HepG2 (cell line): ENCODE measurements at regions of chr4 and their contacts with region 1.

Region 1: GRCh38 chr4:89024051-89024675 is 32.8 kb downstream of the FAM13A start:
- DNase-seq: peak; percentile 77
- ATAC-seq: peak; percentile 98
- H3K4me3 ChIP-seq: no peak overlapping the region
- H3K27ac ChIP-seq: no peak overlapping the region
- H3K4me1 ChIP-seq: peaks cover 35% of the 10 kb centered on the region
- H3K27me3 ChIP-seq: no peaks in the 10 kb centered on the region
- CTCF ChIP-seq: peak; percentile 87
- EP300 ChIP-seq: no peak
- POLR2A ChIP-seq: no peak
- RAD21 ChIP-seq: peak; percentile 82

Region 2: GRCh38 chr4:88533937-88534750 is 490.0 kb before region 1 on chr4:
- CTCF ChIA-PET with region 1: no interaction called
- POLR2A ChIA-PET with region 1: no interaction called
- in situ Hi-C with region 1: loop called (anchors 10 kb)
- intact Hi-C with region 1: loop called (anchors 1 kb)
- DNase-seq: no peak
- ATAC-seq: no peak
- H3K4me3 ChIP-seq: no peak overlapping the region
- H3K27ac ChIP-seq: no peak overlapping the region
- H3K4me1 ChIP-seq: peaks cover 4% of the 10 kb centered on the region; the same call in 1 of the 2 replicates
- H3K27me3 ChIP-seq: no peaks in the 10 kb centered on the region
- CTCF ChIP-seq: no peak
- EP300 ChIP-seq: no peak
- POLR2A ChIP-seq: no peak
- RAD21 ChIP-seq: no peak

Region 3: DNA sequence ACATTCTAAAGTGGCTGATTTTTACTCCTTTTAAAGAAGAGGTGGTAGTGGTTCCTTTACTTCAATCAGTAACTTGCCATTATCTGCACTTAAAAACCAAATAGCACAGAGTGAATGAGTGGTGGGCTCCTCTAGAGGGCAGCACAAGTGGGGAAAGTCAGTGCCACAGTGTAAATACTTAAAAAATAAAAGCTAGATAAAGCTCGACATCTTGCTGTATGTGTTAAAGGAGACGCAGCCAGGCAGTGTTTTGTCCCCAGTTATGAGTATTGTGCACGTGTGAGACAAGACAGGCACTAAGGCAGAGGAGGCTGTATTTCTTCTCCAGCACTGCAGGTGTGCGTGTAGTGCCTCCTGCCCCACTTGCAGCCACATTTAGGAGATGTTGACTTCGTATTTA is 351.2 kb before region 1 on chr4:
- CTCF ChIA-PET with region 1: interaction called, 11 read pairs
- POLR2A ChIA-PET with region 1: no interaction called
- in situ Hi-C with region 1: no loop called
- intact Hi-C with region 1: loop called (anchors 10 kb)
- DNase-seq: peak; percentile 28
- ATAC-seq: peak; percentile 93
- H3K4me3 ChIP-seq: no peak overlapping the region
- H3K27ac ChIP-seq: no peak overlapping the region
- H3K4me1 ChIP-seq: no peaks in the 10 kb centered on the region
- H3K27me3 ChIP-seq: no peaks in the 10 kb centered on the region
- CTCF ChIP-seq: peak; percentile 73
- EP300 ChIP-seq: no peak
- POLR2A ChIP-seq: no peak
- RAD21 ChIP-seq: no peak

Region 4: GRCh38 chr4:88706574-88706973 is 317.6 kb before region 1 on chr4:
- CTCF ChIA-PET with region 1: interaction called, 13 read pairs
- POLR2A ChIA-PET with region 1: no interaction called
- in situ Hi-C with region 1: loop called (anchors 10 kb)
- intact Hi-C with region 1: loop called (anchors 1 kb)
- DNase-seq: peak; percentile 53
- ATAC-seq: peak; percentile 92
- H3K4me3 ChIP-seq: no peak overlapping the region
- H3K27ac ChIP-seq: no peak overlapping the region
- H3K4me1 ChIP-seq: no peaks in the 10 kb centered on the region
- H3K27me3 ChIP-seq: no peaks in the 10 kb centered on the region
- CTCF ChIP-seq: peak; percentile 72
- EP300 ChIP-seq: no peak
- POLR2A ChIP-seq: no peak
- RAD21 ChIP-seq: peak; percentile 65; the same call in 1 of the 2 replicates

Region 5: DNA sequence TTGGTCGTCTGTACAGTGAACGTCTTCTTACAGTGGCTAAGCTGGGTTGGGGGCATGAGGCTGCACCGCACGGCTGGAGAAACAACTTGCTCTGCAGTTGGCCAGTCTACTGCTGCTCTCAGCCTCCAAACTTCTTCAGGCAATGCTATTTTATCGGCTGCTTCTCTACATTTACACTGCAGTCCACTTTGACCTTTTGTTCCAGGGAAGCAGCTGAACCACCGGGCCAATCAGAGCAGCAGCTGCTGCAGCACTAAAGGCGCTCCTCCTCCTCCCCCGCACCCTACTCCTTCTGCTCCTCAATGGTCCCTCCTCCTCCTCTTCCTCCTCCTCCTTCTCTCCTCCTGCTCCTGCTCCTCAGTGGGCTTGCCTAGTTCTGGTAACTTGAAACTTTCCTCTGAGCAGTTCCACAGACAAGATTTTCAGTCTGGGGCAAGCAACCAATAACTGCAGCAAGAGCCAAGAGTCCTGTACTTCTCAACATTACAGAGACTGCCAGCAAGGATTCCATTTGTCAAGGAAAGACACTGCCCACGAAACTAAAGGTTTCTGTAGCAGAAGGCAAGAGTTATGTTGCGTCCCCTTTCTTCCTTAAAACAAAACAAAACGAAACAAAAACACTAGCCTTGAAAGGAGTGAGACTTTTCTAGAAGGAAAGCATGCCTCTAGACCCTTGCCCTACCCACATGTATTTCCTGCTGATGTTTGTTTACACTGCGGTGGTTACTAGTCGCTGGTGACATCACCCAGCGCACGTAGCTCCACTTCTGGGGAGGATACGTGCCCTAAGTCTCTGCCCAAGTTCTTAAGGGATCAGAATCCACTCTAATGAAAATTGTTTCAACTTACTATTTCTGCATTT is 200.9 kb before region 1 on chr4:
- CTCF ChIA-PET with region 1: interaction called, 78 read pairs
- POLR2A ChIA-PET with region 1: no interaction called
- in situ Hi-C with region 1: loop called (anchors 5 kb)
- intact Hi-C with region 1: loop called (anchors 1 kb)
- DNase-seq: peak; percentile 61
- ATAC-seq: peak; percentile 97
- H3K4me3 ChIP-seq: peak overlapping the region; percentile 60 to 78 (median 76)
- H3K27ac ChIP-seq: peak overlapping the region; percentile 64
- H3K4me1 ChIP-seq: peaks cover 57% of the 10 kb centered on the region
- H3K27me3 ChIP-seq: no peaks in the 10 kb centered on the region; a peak in 1 of 5 replicates
- CTCF ChIP-seq: no peak
- EP300 ChIP-seq: peak in 1 of 2 experiments; percentile 64; a peak in 1 of 4 replicates
- POLR2A ChIP-seq: peak; percentile 34 to 95; a peak in 3 of 4 replicates
- RAD21 ChIP-seq: no peak

Region 6: GRCh38 chr4:88991761-88992160 is 32.4 kb before region 1 on chr4:
- CTCF ChIA-PET with region 1: no interaction called
- POLR2A ChIA-PET with region 1: no interaction called
- in situ Hi-C with region 1: no loop called
- intact Hi-C with region 1: no loop called
- DNase-seq: no peak
- ATAC-seq: no peak
- H3K4me3 ChIP-seq: no peak overlapping the region
- H3K27ac ChIP-seq: no peak overlapping the region
- H3K4me1 ChIP-seq: 0 out of 2 replicates have a peak, but pooled peaks cover 8% of the 10 kb centered on the region
- H3K27me3 ChIP-seq: no peaks in the 10 kb centered on the region
- CTCF ChIP-seq: no peak
- EP300 ChIP-seq: no peak
- POLR2A ChIP-seq: no peak
- RAD21 ChIP-seq: no peak

Region 7: DNA sequence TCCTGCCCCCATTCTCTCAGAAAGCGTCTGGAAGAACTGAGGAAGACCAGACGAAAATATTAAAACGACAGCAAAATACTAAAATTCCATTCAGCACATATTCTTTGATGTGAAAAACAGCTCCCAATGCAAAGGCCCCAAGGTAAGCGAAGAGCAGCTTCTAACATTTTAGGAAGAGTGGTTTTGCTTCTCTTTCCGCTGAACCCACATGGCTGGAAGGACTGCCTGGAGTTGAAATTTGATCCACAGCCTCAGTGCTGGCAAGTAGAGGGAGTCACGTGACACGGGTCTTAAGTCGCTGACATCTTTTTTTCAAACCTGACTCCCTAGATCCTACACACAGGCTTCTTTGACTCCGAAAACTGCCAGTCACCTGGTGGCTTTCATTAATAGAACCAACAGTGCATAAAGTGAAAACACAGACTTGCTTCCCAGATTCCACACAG is 32.8 kb after region 1 on chr4 and contains the start of gene FAM13A:
- CTCF ChIA-PET with region 1: no interaction called
- POLR2A ChIA-PET with region 1: no interaction called
- in situ Hi-C with region 1: no loop called
- intact Hi-C with region 1: no loop called
- DNase-seq: peak; percentile 12
- ATAC-seq: peak; percentile 44; the same call in 2 of the 3 replicates
- H3K4me3 ChIP-seq: no peak within 1 kb of the TSS
- H3K27ac ChIP-seq: no peak within 1 kb of the TSS
- H3K4me1 ChIP-seq: peaks cover 6% of the 10 kb centered on the region; the same call in 1 of the 2 replicates
- H3K27me3 ChIP-seq: no peaks in the 10 kb centered on the region
- CTCF ChIP-seq: no peak
- EP300 ChIP-seq: no peak
- POLR2A ChIP-seq: no peak
- RAD21 ChIP-seq: no peak
- total RNA-seq, gene FAM13A: 1.2 and 1.6 TPM in 2 replicates

Region 8: DNA sequence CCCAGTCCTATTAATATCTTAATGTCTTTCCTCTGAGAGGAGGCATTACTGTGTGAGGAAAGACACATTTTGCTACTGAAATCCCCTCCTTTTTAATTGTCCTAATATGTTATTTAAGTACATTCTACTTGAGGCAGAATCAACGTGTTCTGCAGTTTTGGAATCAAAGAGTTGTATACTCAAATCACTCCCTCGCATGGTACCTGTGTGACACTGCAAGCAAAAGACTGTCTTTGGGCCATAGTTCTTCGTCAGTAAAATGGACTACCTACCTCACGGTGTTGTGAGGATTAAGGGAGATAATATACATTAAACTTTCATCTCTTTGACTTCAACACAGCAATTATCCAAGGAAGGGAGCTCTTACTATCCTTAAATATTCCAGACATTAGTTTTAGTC is 148.7 kb after region 1 on chr4:
- CTCF ChIA-PET with region 1: no interaction called
- POLR2A ChIA-PET with region 1: no interaction called
- in situ Hi-C with region 1: no loop called
- intact Hi-C with region 1: no loop called
- DNase-seq: peak; percentile 7
- ATAC-seq: peak; percentile 68; the same call in 2 of the 3 replicates
- H3K4me3 ChIP-seq: no peak overlapping the region
- H3K27ac ChIP-seq: no peak overlapping the region
- H3K4me1 ChIP-seq: no peaks in the 10 kb centered on the region
- H3K27me3 ChIP-seq: no peaks in the 10 kb centered on the region; a peak in 1 of 5 replicates
- CTCF ChIP-seq: no peak
- EP300 ChIP-seq: no peak
- POLR2A ChIP-seq: no peak
- RAD21 ChIP-seq: no peak